Activated B cell treated with CpG ODN at 0.5 μM for 24 hours (primary cell): ENCODE measurements at regions of chr4 and their contacts with region 1.

Region 1: GRCh38 chr4:174714393-174715211 is 114.4 kb downstream of the GLRA3 start:
- DNase-seq: no peak
- ATAC-seq: no peak
- H3K4me3 Mint-ChIP-seq: no peak overlapping the region
- H3K27ac Mint-ChIP-seq: no peak overlapping the region
- H3K4me1 Mint-ChIP-seq: no peaks in the 10 kb centered on the region
- H3K27me3 Mint-ChIP-seq: no peaks in the 10 kb centered on the region
- CTCF ChIP-seq: no peak

Region 2: DNA sequence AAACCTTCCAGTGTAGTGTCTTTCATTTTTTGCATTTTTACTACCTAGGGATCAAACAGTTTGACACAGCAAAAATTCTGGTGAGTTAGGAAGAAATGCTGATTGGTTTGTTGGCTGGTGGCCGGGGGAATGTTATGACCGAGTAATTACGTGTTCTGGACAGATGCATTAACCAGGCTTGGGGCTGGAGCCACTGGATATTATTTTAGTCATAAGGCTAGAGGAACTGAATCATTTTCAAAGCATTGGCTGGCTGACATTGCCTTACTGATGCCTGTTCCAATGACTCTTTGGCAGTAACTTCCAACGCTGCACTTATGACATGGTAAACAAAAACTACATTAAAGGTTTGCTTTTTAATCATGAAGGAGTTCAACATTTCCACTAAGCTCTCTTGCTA is 515.8 kb before region 1 on chr4:
- CTCF ChIA-PET with region 1: no interaction called
- POLR2A ChIA-PET with region 1: no interaction called
- intact Hi-C with region 1: no loop called
- DNase-seq: no peak
- ATAC-seq: no peak
- H3K4me3 Mint-ChIP-seq: no peak overlapping the region
- H3K27ac Mint-ChIP-seq: no peak overlapping the region
- H3K4me1 Mint-ChIP-seq: no peaks in the 10 kb centered on the region
- H3K27me3 Mint-ChIP-seq: peaks cover 12% of the 10 kb centered on the region
- CTCF ChIP-seq: no peak

Region 3: GRCh38 chr4:174225349-174226049 is 489.1 kb before region 1 on chr4:
- CTCF ChIA-PET with region 1: no interaction called
- POLR2A ChIA-PET with region 1: no interaction called
- intact Hi-C with region 1: no loop called
- DNase-seq: no peak
- ATAC-seq: no peak
- H3K4me3 Mint-ChIP-seq: no peak overlapping the region
- H3K27ac Mint-ChIP-seq: no peak overlapping the region
- H3K4me1 Mint-ChIP-seq: no peaks in the 10 kb centered on the region
- H3K27me3 Mint-ChIP-seq: peaks cover 28% of the 10 kb centered on the region
- CTCF ChIP-seq: no peak

Region 4: DNA sequence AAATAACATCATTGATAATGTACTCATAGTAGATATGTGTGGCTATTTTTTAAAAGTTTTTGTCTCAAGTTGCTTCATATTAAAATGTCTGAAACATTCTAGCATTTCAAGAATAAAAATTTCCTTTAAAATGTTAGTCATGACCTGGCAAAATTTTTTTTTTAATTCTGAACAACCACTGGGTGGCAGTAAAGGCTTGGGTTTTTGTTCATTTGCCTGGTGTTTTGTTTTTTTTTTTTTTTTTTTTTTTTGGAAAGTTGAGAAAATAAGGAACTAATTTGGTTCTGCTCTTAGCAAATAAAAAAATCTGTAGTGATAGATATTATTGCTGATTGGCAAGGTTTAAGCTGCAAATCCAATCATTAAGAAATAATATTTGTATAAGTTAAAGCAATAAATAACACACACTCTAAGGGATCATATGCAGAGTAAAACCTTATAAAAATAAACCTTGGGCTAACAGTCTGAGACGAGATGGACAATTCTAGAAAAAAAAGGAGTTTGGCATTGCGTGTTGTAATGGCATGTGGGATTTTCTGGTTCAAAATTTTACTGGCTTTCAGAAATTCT is 349.5 kb before region 1 on chr4:
- CTCF ChIA-PET with region 1: interaction called, 3 read pairs
- POLR2A ChIA-PET with region 1: no interaction called
- intact Hi-C with region 1: loop called (anchors 1 kb)
- DNase-seq: no peak
- ATAC-seq: no peak
- H3K4me3 Mint-ChIP-seq: no peak overlapping the region
- H3K27ac Mint-ChIP-seq: no peak overlapping the region
- H3K4me1 Mint-ChIP-seq: no peaks in the 10 kb centered on the region
- H3K27me3 Mint-ChIP-seq: no peaks in the 10 kb centered on the region
- CTCF ChIP-seq: no peak

Region 5: DNA sequence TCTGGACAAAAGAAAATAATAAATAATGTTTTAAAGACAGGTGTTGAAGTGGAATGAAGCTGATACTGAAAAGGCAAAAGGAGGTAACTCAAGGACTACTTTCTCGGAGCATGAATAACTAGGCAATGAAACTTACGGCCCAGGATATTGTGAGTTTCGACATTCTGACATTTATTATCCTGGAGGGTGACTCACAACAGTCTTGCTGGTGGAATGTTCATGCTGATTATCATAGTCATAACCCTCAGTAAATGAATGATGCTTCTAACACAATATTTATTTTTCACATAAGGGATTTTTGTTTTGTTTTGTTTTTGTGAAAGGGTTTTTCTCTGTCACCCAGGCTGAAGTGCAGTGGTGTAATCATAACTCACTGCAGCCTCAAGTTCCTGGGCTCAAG is 45.3 kb before region 1 on chr4:
- CTCF ChIA-PET with region 1: no interaction called
- POLR2A ChIA-PET with region 1: no interaction called
- intact Hi-C with region 1: no loop called
- DNase-seq: no peak
- ATAC-seq: no peak
- H3K4me3 Mint-ChIP-seq: no peak overlapping the region
- H3K27ac Mint-ChIP-seq: no peak overlapping the region
- H3K4me1 Mint-ChIP-seq: no peaks in the 10 kb centered on the region
- H3K27me3 Mint-ChIP-seq: no peaks in the 10 kb centered on the region
- CTCF ChIP-seq: no peak

Region 6: GRCh38 chr4:174681723-174682300 is 32.8 kb before region 1 on chr4:
- CTCF ChIA-PET with region 1: no interaction called
- POLR2A ChIA-PET with region 1: no interaction called
- intact Hi-C with region 1: no loop called
- DNase-seq: no peak
- ATAC-seq: no peak
- H3K4me3 Mint-ChIP-seq: no peak overlapping the region
- H3K27ac Mint-ChIP-seq: no peak overlapping the region
- H3K4me1 Mint-ChIP-seq: no peaks in the 10 kb centered on the region
- H3K27me3 Mint-ChIP-seq: no peaks in the 10 kb centered on the region
- CTCF ChIP-seq: no peak